Gastrocnemius medialis (tissue), 4 donors: ENCODE measurements at regions of chr12 and their contacts with region 1.

Region 1: DNA sequence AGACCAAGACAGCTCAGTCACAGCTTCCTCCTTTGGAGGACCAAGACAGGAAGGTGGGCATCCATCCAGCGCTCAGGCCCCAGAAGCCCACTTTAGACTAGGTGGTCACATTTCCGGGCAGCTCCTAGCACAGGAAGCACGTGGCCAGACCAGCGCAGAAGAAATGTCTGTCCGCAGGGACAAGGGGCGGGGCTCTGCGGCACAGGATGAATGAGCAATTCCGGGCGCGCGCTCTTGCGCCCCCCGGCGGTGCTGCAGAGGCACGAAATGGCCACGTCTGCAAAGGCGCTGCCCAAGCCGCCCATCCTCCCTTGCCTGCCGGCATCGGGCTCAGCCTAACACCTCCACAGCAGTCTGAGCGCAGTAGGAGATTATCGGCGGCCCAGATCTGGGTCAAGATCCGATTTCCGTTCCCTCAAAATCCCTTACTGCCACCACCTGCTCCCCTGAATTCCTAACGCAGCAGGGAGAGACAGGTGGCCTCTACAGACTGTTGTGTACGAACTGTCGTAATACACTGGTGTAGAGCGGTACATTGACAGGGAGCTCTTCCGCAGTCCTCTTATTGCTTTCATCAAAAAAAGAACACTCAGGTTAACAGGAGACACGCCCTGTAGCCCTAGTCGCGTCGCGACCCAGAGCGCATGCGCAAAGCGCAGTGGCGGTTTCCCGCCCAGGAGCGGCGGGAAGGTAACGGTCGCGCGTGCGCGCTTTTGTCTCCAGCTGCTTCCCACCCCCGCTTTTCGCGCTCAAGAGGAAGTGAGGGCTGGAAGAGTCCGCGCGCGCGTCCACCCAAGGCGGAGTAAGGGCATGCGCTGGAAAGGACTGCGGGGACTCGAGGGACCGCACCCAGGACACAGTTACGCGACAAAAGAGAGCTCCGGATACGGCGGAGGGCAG is 794 bp downstream of the TUBA1B start:
- DNase-seq: peak; percentile 83 to 89
- ATAC-seq: peak; percentile 84 to 87
- H3K4me3 ChIP-seq: peak overlapping the region; percentile 82 to 100 (median 96)
- H3K27ac ChIP-seq: peak overlapping the region; percentile 99 to 100 (median 100)
- H3K4me1 ChIP-seq: peaks cover 25 to 30% of the 10 kb centered on the region in 2 donors
- H3K27me3 ChIP-seq: no peaks in the 10 kb centered on the region
- CTCF ChIP-seq: peak; percentile 69 to 93 (median 85)
- POLR2A ChIP-seq: no peak

Region 2: GRCh38 chr12:48999371-49000131 is 130.8 kb before region 1 on chr12 and contains the start of gene DDN:
- in situ Hi-C with region 1: no loop called
- intact Hi-C with region 1: no loop called
- DNase-seq: peak in 1 of 2 donors; percentile 79
- ATAC-seq: peak; percentile 51 to 53
- H3K4me3 ChIP-seq: peak within 1 kb of the TSS; percentile 45 to 75 (median 59)
- H3K27ac ChIP-seq: peak within 1 kb of the TSS; percentile 67 to 93 (median 84)
- H3K4me1 ChIP-seq: peaks cover 40 to 46% of the 10 kb centered on the region in 2 donors
- H3K27me3 ChIP-seq: peaks cover 0 to 51% (median 13%) of the 10 kb centered on the region in 3 donors
- CTCF ChIP-seq: no peak
- POLR2A ChIP-seq: peak in 1 of 2 donors; percentile 55
- total RNA-seq, gene DDN: 26.8 to 415 (median 232) TPM

Region 3: DNA sequence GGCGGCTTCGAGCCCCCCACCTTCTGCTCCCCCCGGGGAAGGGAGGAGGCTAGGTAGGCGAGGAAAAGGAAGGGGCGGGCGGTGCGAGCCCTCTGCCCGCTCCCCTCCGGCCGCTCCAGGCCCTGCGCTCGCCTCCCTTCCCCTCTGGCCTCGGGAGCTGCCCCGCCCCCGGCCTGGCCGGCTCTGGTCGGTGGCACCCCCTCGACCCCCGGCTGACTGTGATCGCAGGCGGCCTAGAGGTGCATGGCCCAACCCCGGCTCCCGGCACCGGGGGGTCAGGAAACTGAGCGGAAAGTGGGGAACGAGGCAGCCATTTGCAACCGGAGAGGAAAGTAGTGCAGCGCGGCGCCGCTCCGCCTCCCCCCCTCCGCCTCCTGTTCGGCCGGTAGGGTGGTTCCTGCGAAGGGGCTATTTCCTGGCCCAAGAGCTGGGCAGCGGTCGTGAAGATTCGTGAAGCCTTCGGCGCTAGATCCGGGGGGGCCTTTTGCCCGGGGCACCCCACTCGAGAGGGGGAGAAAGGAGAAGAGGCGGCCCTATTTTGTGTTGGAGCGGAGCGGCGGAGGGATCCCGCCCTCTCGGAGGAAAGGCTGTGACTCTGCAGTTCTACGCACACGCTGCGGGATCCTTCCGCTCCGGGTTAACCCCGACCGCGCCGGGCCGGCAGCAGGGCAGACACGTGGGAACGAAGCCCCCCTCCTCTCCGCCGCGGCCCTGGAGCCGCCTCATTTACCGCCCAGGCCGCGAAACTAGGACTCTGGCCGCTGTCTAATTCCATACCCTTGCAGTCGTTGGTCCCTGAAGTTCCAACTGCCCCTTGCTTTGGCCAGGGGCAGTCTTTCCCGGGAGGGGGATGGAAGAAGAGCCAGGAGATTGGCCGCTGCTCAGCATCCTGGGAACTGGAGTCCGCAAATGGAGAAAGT is 69.9 kb before region 1 on chr12 and contains the start of gene KMT2D:
- in situ Hi-C with region 1: no loop called
- intact Hi-C with region 1: loop called (anchors 2 kb)
- DNase-seq: peak; percentile 83 to 89
- ATAC-seq: peak; percentile 79
- H3K4me3 ChIP-seq: peak within 1 kb of the TSS; percentile 83 to 100 (median 94)
- H3K27ac ChIP-seq: peak within 1 kb of the TSS; percentile 97 to 100 (median 99)
- H3K4me1 ChIP-seq: peaks cover 41 to 45% of the 10 kb centered on the region in 2 donors
- H3K27me3 ChIP-seq: no peaks in the 10 kb centered on the region
- CTCF ChIP-seq: peak; percentile 36 to 83 (median 63)
- POLR2A ChIP-seq: peak; percentile 69 to 76
- total RNA-seq, gene KMT2D: 36.0 to 99.0 (median 71.3) TPM

Region 4: GRCh38 chr12:49069507-49070346 is 60.7 kb before region 1 on chr12 and contains the start of gene RHEBL1:
- in situ Hi-C with region 1: loop called in 1 of 4 experiments (anchors 10 kb)
- intact Hi-C with region 1: loop called (anchors 2 kb)
- DNase-seq: peak; percentile 97 to 98
- ATAC-seq: peak; percentile 98 to 99
- H3K4me3 ChIP-seq: peak within 1 kb of the TSS; percentile 77 to 94 (median 86)
- H3K27ac ChIP-seq: peak within 1 kb of the TSS; percentile 80 to 84 (median 82)
- H3K4me1 ChIP-seq: peaks cover 9 to 11% of the 10 kb centered on the region in 2 donors
- H3K27me3 ChIP-seq: no peaks in the 10 kb centered on the region
- CTCF ChIP-seq: peak in 1 of 5 experiments; percentile 9
- POLR2A ChIP-seq: peak; percentile 17 to 26
- total RNA-seq, gene RHEBL1: 0.46 to 0.71 TPM in 2 of 4 donors, not detected in the others

Region 5: GRCh38 chr12:49088190-49088931 is 42.0 kb before region 1 on chr12:
- in situ Hi-C with region 1: no loop called
- intact Hi-C with region 1: loop called (anchors 1 kb)
- DNase-seq: peak; percentile 51 to 77
- ATAC-seq: peak; percentile 94 to 97
- H3K4me3 ChIP-seq: peak overlapping the region in 2 of 4 donors; percentile 20 to 40
- H3K27ac ChIP-seq: no peak overlapping the region
- H3K4me1 ChIP-seq: peaks cover 8 to 22% of the 10 kb centered on the region in 2 donors
- H3K27me3 ChIP-seq: peaks cover 42 to 45% (median 45%) of the 10 kb centered on the region in 3 donors
- CTCF ChIP-seq: peak; percentile 72 to 92 (median 87)
- POLR2A ChIP-seq: no peak

Region 6: DNA sequence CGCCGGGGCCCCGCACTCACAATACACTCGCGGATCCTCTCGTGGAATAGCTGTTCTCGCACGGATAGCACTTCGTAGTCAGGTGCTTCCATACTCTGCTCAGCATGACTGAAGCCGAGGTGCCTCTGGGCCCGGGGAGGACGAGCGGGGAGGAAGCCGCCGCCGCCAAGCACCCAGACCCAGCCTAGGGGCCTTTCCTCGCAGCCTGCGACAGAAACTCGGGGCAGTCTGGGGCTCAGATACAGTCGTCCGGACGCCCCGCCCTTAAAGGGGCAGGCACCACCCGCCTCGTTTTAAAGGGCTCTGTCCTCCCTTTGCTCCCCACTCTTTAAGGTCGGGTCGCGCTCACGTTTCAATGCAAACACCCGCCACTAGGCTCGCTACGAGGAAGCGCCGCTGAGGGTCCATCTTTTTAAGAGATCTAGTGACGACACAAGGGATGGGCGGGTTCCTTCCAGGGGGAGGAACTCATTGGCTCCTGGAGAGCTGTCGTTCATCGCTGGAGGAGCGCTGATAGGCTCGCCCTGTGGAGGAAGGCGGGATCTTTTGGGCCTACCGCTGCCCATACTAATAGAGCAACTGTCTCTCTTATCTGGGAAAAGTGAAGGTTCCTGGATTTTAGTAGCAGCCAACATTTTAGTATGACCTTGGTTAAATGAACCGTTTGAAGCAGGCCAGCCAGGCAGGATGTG is 19.8 kb before region 1 on chr12 and contains the start of gene LMBR1L:
- in situ Hi-C with region 1: no loop called
- intact Hi-C with region 1: loop called (anchors 1 kb)
- DNase-seq: peak; percentile 97 to 98
- ATAC-seq: peak; percentile 97 to 98
- H3K4me3 ChIP-seq: peak within 1 kb of the TSS; percentile 81 to 99 (median 99)
- H3K27ac ChIP-seq: peak within 1 kb of the TSS; percentile 92 to 100 (median 100)
- H3K4me1 ChIP-seq: peaks cover 43 to 48% of the 10 kb centered on the region in 2 donors
- H3K27me3 ChIP-seq: no peaks in the 10 kb centered on the region
- CTCF ChIP-seq: peak; percentile 50 to 67 (median 56)
- POLR2A ChIP-seq: peak; percentile 80 to 97
- total RNA-seq, gene LMBR1L: 11.1 to 27.2 (median 15.9) TPM

Region 7: GRCh38 chr12:49188914-49189367 is 58.5 kb after region 1 on chr12 and contains the start of gene TUBA1A:
- in situ Hi-C with region 1: no loop called
- intact Hi-C with region 1: loop called (anchors 2 kb)
- DNase-seq: peak; percentile 77 to 78
- ATAC-seq: peak; percentile 79 to 90
- H3K4me3 ChIP-seq: peak within 1 kb of the TSS; percentile 67 to 93 (median 78)
- H3K27ac ChIP-seq: peak within 1 kb of the TSS; percentile 80 to 86 (median 84)
- H3K4me1 ChIP-seq: peaks cover 8 to 14% of the 10 kb centered on the region in 2 donors
- H3K27me3 ChIP-seq: peaks cover 7 to 8% (median 7%) of the 10 kb centered on the region in 3 donors
- CTCF ChIP-seq: no peak
- POLR2A ChIP-seq: peak; percentile 51 to 82
- total RNA-seq, gene TUBA1A: 14.7 to 68.0 (median 25.1) TPM

Region 8: DNA sequence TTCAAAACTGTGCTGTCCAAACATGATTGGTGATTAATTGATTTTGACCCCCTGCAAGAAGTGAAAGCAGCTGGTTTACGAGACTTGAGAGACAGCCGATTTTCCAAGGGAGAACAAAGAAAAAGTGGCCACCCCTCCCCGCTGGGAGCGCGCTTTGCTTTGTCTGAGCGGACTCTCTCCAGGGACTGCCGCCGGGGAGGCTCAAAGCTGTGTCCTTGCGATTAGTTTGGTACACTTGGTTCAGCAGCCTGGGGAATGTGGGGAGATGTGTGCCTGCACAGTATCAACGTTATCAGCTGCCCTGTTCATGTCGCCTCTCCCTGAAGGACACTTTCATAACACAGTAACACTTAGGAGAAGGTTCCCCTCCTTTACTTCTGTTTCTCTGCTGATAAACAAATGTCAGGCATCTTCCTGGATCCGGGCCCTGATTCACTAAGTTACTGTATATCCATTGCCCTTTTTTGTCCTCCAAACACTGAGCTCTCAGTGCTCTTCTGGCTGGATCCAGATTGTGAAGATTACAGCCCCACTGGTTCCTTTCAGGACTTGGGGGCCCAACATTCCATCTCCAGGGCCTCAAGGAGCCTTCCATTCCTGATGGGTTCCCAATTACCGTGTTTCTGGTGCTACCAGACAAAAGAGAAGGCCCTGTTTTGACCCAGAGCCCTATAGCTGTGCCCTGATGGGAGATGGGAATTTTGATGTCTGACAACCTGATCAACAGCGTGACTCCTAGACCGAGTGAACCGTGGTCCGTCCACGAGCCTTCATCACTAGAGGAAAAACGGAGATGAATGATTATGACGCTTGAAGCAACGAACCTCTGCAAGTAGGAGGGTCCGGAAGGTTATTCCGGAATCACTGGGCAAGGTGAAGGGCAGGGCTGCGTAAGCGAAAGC is 102.8 kb after region 1 on chr12:
- in situ Hi-C with region 1: no loop called
- intact Hi-C with region 1: loop called (anchors 1 kb)
- DNase-seq: peak in 1 of 2 donors; percentile 17
- ATAC-seq: no peak
- H3K4me3 ChIP-seq: peak overlapping the region in 2 of 4 donors; percentile 2 to 22
- H3K27ac ChIP-seq: peak overlapping the region; percentile 35 to 44 (median 38)
- H3K4me1 ChIP-seq: peaks cover 11 to 13% of the 10 kb centered on the region in 2 donors
- H3K27me3 ChIP-seq: no peaks in the 10 kb centered on the region
- CTCF ChIP-seq: no peak
- POLR2A ChIP-seq: no peak

Region 9: GRCh38 chr12:49909826-49910225 is 779.4 kb after region 1 on chr12:
- in situ Hi-C with region 1: no loop called
- intact Hi-C with region 1: no loop called
- DNase-seq: no peak
- ATAC-seq: no peak
- H3K4me3 ChIP-seq: no peak overlapping the region
- H3K27ac ChIP-seq: no peak overlapping the region
- H3K4me1 ChIP-seq: no peaks in the 10 kb centered on the region
- H3K27me3 ChIP-seq: peaks cover under 1 to 11% (median under 1%) of the 10 kb centered on the region in 3 donors
- CTCF ChIP-seq: no peak
- POLR2A ChIP-seq: no peak